Dendritic cell treated with granulocyte-macrophage colony-stimulating factor and Interleukin-4, amounts not matched to agents 40 ng/mL and 50 ng/mL, for 4 days (primary cell): ENCODE measurements at regions of chr9 and their contacts with region 1.

Region 1: GRCh38 chr9:97675655-97676054 is 21.5 kb downstream of the XPA start:
- H3K4me3 Mint-ChIP-seq: no peak overlapping the region
- H3K27ac Mint-ChIP-seq: no peak overlapping the region
- H3K4me1 Mint-ChIP-seq: no peaks in the 10 kb centered on the region
- H3K27me3 Mint-ChIP-seq: no peaks in the 10 kb centered on the region

Region 2: DNA sequence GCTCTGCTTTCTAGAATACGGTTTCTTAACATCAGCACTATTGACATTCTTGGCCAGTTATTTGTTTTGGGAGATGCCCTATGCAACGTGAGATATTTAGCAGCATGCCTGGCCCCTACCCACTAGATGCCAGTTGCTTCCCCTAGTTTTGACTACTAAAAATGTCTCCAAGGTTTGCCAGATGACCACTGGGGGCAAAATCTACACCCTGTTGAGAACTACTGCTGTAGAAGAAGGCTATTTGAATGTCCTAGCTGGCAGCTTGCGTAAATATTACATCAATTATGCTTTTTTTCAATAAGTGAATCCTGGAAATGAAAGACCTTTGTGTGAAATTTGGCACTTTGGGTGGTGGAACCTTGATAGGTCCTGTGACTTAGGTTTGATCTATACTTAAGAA is 37.0 kb before region 1 on chr9:
- intact Hi-C with region 1: loop called (anchors 5 kb)
- H3K4me3 Mint-ChIP-seq: no peak overlapping the region
- H3K27ac Mint-ChIP-seq: no peak overlapping the region
- H3K4me1 Mint-ChIP-seq: peaks cover 40% of the 10 kb centered on the region
- H3K27me3 Mint-ChIP-seq: no peaks in the 10 kb centered on the region